Aorta (tissue), 5 donors: ENCODE measurements at regions of chr2 and their contacts with region 1.

Region 1: DNA sequence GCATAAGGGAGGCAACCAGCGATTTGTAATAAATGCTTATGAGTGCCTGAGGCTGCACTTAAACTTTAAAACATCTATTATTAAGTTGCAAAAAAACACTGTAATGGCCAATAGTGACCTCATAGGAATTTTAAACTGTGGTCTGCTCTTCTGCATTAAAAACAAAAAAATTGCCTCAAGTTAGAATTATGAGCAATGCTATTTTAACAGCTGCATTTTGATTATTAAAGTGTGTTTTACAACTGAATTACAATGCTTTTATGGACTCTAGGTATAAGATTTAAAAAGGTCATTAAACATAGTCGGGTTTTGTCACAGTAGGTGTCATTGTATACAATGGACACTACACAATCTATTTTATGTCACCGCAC is 528.7 kb upstream of the FANCL start:
- DNase-seq: no peak
- ATAC-seq: no peak
- H3K4me3 ChIP-seq: no peak overlapping the region
- H3K27ac ChIP-seq: no peak overlapping the region
- H3K4me1 ChIP-seq: no peaks in the 10 kb centered on the region
- H3K27me3 ChIP-seq: no peaks in the 10 kb centered on the region

Region 2: DNA sequence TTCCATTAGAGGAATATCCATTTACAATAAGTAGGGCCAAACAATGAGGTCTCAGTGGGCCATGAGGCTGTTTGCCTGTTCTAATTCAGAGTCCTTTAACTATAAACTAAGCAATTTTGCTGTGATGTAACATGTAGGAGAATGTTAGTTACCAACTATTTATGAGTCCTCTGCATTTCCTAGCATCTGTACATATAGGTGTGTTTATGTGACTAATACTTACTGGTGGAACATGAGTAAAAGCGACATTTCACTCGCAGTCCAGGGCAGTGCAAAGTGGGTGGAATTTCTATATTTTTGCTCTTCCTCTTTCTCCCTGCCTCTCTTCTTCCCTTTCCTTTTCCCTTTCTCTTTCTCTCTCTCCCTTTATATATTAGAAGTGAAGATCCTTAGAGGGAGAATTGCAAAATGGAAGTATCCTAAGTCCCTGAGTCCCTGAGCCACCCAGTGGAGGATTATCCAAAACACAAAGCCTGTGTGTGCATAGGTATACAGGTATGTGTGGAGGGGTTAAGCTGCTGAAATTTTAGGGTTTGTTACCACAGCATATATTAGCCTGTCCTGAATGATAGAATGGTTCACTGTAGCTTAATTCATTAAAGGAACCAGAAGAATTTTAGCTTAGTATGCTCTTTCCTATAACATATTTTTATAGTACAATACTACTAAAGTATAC is 41.7 kb before region 1 on chr2:
- intact Hi-C with region 1: loop called in 1 of 2 experiments (anchors 2 kb)
- DNase-seq: no peak
- ATAC-seq: no peak
- H3K4me3 ChIP-seq: no peak overlapping the region
- H3K27ac ChIP-seq: no peak overlapping the region
- H3K4me1 ChIP-seq: no peaks in the 10 kb centered on the region
- H3K27me3 ChIP-seq: no peaks in the 10 kb centered on the region